CD8-positive, alpha-beta T cell (primary cell): ENCODE measurements at regions of chr10 and their contacts with region 1.

Region 1: DNA sequence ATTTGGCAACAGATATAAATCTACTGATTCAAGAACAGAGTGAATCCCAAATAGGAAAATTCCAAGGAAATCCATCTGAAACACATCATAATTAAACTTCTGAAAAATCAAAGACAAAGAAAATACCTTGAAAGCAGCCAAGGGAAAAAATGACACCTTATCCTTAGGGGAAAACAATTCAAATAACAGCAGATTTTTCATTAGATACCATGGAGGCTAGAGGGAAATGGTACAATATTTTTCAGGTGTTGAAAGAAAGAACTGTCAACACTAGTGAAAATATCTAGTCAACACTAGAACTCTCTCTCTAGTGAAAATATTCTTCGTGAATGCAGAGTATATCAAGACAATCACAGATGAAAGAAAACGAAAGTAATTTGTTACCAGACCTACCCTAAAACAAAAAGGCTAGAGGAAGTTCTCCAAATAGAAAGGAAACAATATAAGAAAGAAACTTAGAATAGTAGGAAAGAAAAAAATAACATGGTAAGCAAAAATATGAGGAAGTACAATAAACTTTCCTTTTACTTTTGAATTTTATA is 5.7 kb upstream of the FAM241B start:
- DNase-seq: peak in 1 of 9 experiments; percentile 48
- ATAC-seq: peak; percentile 73
- H3K4me3 ChIP-seq: no peak overlapping the region
- H3K4me3 Mint-ChIP-seq: peak overlapping the region; percentile 16
- H3K27ac ChIP-seq: peak overlapping the region in 1 of 2 experiments; percentile 26
- H3K27ac Mint-ChIP-seq: peak overlapping the region; percentile 84
- H3K4me1 ChIP-seq: peaks cover 28% of the 10 kb centered on the region
- H3K4me1 Mint-ChIP-seq: peaks cover 48% of the 10 kb centered on the region
- H3K27me3 ChIP-seq: no peaks in the 10 kb centered on the region
- H3K27me3 Mint-ChIP-seq: no peaks in the 10 kb centered on the region
- CTCF ChIP-seq: no peak

Region 2: DNA sequence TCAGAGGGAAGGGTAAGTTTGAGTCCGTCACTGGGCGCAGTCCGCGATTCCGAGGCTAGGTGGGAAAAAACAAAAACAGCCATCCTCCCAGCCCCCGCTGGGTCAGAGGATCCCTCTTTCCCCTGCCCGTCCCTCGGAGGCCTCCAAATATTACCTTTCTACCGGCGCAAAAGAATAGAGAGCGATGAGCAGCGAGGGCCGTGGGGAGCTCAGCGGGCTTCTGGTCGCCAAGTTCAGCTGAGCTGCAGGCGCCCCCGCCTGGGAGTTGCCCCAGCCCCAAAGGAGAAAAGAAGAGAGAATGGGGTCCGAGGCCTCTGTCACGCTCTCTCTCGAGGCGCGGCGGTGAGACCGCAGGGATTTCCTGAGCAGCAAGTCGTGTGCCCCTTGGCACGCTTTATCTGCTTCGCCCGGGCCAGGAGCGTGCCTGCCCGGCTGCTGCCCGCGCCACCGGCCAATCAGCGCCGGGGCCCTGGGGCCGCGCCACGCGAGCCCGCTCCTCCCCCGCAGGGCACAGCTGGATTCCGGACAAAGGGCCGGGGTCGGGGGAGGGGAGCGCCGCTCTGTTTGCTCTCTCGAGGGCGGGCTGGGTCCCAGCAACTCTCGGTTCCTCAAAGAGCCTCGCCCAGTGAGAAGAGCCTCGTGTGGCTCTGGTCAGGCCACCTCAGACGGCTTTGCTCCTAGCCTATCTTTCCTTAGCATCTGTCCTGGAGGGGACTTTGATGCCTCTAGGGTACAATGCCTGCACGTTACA is 51.1 kb before region 1 on chr10 and contains the start of gene NEUROG3:
- CTCF ChIA-PET with region 1: no interaction called
- POLR2A ChIA-PET with region 1: interaction called, 3 read pairs
- intact Hi-C with region 1: loop called in 1 of 2 experiments (anchors 5 kb)
- DNase-seq: peak in 2 of 9 experiments; percentile 13 to 22
- ATAC-seq: no peak
- H3K4me3 ChIP-seq: peak within 1 kb of the TSS; percentile 47 to 77
- H3K4me3 Mint-ChIP-seq: peak within 1 kb of the TSS; percentile 82
- H3K27ac ChIP-seq: no peak within 1 kb of the TSS
- H3K27ac Mint-ChIP-seq: no peak within 1 kb of the TSS
- H3K4me1 ChIP-seq: peaks cover 30% of the 10 kb centered on the region
- H3K4me1 Mint-ChIP-seq: peaks cover 35% of the 10 kb centered on the region
- H3K27me3 ChIP-seq: peaks cover 22 to 46% of the 10 kb centered on the region in 2 experiments
- H3K27me3 Mint-ChIP-seq: peaks cover 65% of the 10 kb centered on the region
- CTCF ChIP-seq: no peak
- total RNA-seq, gene NEUROG3: not detected

Region 3: DNA sequence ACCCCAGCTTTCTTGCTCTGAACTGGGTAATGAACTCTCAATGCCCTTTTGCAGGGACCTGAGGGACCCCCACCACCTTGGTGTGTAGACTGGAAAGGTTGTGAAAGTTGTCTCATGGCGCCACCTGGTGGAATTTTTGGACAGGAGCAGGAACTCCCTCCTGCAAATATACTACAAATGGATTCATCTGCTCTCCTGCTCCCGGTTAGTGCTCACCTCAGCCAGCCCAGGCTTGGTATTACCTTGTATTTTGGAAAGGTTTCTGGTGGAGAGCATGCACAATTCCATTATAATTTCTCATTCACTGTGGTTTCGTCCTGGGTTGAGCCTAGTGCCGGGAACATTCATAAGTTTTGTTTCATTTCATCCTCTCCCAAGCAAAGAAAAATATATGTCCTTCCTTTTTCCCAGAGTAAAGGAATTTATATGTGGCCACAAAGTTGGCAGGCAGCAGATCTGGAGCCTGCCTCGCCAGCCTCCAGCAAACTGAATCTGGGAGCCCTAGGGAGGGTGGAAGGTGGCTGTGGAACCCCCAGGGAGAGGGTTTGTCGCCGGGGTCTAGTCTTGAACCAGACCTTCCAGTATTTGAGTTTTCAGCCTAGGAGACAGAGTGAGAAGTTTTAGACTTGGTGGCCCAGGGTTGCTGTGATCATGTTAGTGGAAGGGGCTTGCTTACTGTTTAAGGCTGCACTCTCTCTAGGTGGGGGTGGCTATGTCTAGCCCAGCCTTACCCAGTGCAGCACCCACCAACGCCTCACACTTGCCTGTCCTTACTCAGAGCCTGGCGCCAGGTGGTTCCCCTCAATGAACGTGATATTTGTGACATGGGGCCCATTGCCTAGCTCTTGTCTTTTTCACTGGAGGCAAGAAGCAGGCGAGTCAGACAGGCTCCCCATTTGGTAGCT is 15.2 kb after region 1 on chr10:
- CTCF ChIA-PET with region 1: interaction called, 16 read pairs
- POLR2A ChIA-PET with region 1: no interaction called
- intact Hi-C with region 1: no loop called
- DNase-seq: peak; percentile 43 to 83 (median 71)
- ATAC-seq: peak; percentile 76
- H3K4me3 ChIP-seq: no peak overlapping the region
- H3K4me3 Mint-ChIP-seq: no peak overlapping the region
- H3K27ac ChIP-seq: no peak overlapping the region
- H3K27ac Mint-ChIP-seq: no peak overlapping the region
- H3K4me1 ChIP-seq: no peaks in the 10 kb centered on the region
- H3K4me1 Mint-ChIP-seq: no peaks in the 10 kb centered on the region
- H3K27me3 ChIP-seq: peaks cover 0 to 2% of the 10 kb centered on the region in 2 experiments
- H3K27me3 Mint-ChIP-seq: peaks cover 7% of the 10 kb centered on the region
- CTCF ChIP-seq: peak; percentile 86

Region 4: DNA sequence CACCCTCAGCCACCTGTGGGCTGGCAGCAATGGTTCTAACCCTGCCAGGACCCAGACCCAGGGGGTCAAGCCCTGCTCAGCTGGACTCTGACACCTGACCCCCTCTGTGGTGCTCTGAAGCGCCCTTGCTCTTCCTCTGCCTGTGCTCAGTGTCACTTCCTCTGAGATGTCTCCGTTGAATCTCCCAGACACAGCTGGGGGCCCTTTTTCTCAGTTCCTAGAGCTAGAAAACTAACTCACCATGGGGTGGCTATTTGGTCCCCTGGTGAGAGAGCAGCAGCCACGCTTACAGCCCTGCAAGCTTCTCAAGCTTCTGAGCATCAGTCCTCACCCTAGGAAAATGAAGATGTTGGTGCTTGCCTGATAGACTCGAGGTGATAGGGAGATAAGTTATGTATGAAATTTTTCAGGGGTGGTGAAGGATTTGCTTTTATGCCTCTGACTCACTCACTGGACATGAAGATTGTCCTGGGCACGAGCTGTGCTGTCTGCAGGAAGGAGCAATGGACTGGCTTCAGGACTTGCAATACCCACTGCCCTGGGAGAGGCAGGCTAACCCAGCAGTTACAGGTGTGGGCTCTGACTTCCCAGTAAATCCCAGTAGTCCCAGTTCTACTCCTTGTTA is 207.0 kb after region 1 on chr10:
- CTCF ChIA-PET with region 1: no interaction called
- POLR2A ChIA-PET with region 1: no interaction called
- intact Hi-C with region 1: no loop called
- DNase-seq: no peak
- ATAC-seq: no peak
- H3K4me3 ChIP-seq: no peak overlapping the region
- H3K4me3 Mint-ChIP-seq: no peak overlapping the region
- H3K27ac ChIP-seq: no peak overlapping the region
- H3K27ac Mint-ChIP-seq: no peak overlapping the region
- H3K4me1 ChIP-seq: no peaks in the 10 kb centered on the region
- H3K4me1 Mint-ChIP-seq: no peaks in the 10 kb centered on the region
- H3K27me3 ChIP-seq: peaks cover 2 to 4% of the 10 kb centered on the region in 2 experiments
- H3K27me3 Mint-ChIP-seq: peaks cover 14% of the 10 kb centered on the region
- CTCF ChIP-seq: no peak